ENCODE measurements at regions of chr5 and their contacts with region 1.

Region 1: GRCh38 chr5:41012318-41012717 is 58.8 kb downstream of the MROH2B start:
- DNase-seq: no peak
- ATAC-seq: no peak
- H3K4me3 Mint-ChIP-seq: no peak overlapping the region
- H3K27ac Mint-ChIP-seq: no peak overlapping the region
- H3K4me1 Mint-ChIP-seq: no peaks in the 10 kb centered on the region
- H3K27me3 Mint-ChIP-seq: no peaks in the 10 kb centered on the region
- CTCF ChIP-seq: no peak

Region 2: GRCh38 chr5:39437469-39437868 is 1574.8 kb before region 1 on chr5:
- CTCF ChIA-PET with region 1: no interaction called
- POLR2A ChIA-PET with region 1: no interaction called
- intact Hi-C with region 1: loop called (anchors 10 kb)
- DNase-seq: no peak
- ATAC-seq: no peak
- H3K4me3 Mint-ChIP-seq: no peak overlapping the region
- H3K27ac Mint-ChIP-seq: no peak overlapping the region
- H3K4me1 Mint-ChIP-seq: no peaks in the 10 kb centered on the region
- H3K27me3 Mint-ChIP-seq: peaks cover 5% of the 10 kb centered on the region
- CTCF ChIP-seq: no peak